ENCODE measurements at regions of chr14 and their contacts with region 1.

Region 1: GRCh38 chr14:23076785-23077408 is 18.0 kb downstream of the ACIN1 start:
- DNase-seq: no peak
- H3K4me3 ChIP-seq: no peak overlapping the region
- CTCF ChIP-seq: no peak

Region 2: DNA sequence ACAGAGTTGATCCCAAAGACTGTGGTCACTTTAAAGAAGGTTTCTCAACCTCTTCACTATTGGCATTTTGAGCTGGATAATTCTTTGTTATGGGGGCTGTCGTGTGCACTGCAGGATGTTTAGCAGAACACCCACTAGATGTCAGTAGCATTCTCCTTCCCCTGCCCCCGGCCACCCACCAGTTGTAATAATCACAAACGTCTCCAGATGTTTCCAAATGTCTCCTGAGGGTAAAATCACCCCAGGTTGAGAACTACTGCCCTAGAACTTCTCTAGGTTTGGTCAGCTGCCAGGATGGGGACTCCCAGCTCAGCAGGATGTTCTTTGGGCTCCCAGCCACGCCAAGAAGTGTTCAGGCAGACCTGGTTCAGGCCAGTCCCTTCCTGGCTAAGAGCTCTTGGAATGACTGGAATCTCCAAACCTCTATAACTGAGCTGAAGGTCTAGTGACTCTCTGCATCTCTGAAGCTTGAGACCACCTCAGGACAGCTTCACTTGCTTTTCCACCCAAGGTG is 82.1 kb before region 1 on chr14:
- CTCF ChIA-PET with region 1: interaction called, 70 read pairs
- POLR2A ChIA-PET with region 1: no interaction called
- DNase-seq: no peak
- H3K4me3 ChIP-seq: no peak overlapping the region
- CTCF ChIP-seq: peak; percentile 65

Region 3: DNA sequence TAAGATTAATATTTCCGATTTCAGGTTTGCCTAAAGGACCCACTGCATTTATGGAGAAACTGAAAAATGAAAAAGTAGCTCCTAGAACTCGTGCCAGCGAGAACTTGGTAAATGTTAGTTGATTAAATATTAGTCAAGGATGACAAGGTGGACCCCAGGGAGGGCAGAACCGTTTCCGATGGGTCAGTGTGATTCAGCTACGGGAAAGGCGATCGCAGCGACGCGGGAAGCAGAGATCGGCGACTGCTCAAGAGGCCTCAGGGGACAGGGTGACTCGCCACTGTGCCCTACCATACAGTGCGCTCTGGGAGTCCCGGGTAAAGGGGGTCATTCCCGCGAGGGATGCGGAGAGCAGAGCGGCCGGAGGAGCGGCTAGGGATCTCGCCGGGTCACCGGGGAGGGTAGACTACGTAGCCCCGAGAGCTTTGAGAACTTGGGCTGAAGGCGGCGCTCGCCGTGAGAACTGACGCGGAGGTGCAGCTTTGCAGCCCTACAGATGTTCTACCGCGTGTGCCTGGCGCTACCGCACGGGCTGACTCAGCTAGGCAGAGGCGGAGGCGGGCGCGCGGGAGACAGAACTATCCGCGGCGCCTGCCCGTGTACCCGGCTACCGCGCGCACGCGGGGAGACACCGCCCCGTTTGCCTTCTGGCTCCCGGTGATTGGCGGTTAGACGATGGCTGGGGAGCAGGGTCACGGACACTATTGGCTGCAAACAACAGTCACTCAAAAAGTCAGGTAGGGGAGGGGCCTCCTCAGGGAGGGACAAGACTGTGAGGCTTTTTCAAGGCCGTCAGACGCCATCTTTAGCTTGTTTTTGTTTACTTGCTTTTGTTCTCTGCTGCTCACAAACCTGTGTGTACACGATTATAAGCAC is 70.1 kb before region 1 on chr14:
- CTCF ChIA-PET with region 1: interaction called, 15 read pairs
- POLR2A ChIA-PET with region 1: no interaction called
- DNase-seq: peak; percentile 86
- H3K4me3 ChIP-seq: peak overlapping the region; percentile 70
- CTCF ChIP-seq: peak; percentile 54

Region 4: GRCh38 chr14:23095196-23096108 is 18.6 kb after region 1 on chr14 and contains the start of gene C14orf119:
- CTCF ChIA-PET with region 1: interaction called, 173 read pairs
- POLR2A ChIA-PET with region 1: interaction called, 29 read pairs
- DNase-seq: peak; percentile 95
- H3K4me3 ChIP-seq: peak within 1 kb of the TSS; percentile 100
- CTCF ChIP-seq: no peak

Region 5: GRCh38 chr14:23104591-23105347 is 27.9 kb after region 1 on chr14 and contains the start of gene CIROP:
- CTCF ChIA-PET with region 1: interaction called, 214 read pairs
- POLR2A ChIA-PET with region 1: no interaction called
- DNase-seq: no peak
- H3K4me3 ChIP-seq: no peak within 1 kb of the TSS
- CTCF ChIP-seq: no peak

Region 6: DNA sequence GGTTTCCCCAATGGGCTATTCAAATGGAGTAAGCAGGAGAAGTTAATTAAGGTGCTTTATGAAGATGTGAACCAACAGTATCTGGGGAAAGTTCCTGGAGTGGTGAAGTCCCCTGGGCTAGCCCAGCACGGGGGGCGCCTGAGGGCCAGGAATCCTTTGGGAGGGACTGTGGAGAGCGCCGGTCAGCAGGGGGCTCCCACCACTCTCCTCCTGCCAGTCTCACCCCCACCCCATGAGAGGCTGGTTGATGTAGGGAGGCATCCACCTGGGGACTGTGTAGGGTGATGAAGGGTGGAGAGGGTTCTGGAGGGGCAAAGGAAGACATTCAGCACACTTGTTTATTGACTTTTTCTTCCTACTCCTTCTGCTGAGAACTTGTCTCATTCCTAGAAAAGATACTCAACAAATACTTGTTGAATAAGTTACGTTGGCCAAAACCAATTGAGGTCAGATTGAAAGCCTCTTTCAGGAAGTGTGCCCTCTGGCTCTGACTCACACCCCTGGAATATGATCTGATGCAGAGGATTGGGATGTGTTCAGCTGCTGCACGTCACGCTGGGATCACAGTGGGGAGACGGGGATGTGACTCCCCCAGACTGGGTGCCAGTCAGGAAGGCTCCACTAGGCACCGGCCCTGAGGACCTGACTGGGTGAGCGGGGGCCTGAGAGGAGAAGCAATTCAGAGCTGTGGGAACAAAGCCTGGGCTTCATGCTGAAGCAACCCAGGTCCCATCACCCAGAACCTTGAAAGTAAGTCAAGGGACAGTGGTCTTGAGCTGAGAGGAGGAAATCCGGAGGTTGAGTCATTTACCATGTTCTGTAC is 38.0 kb after region 1 on chr14:
- CTCF ChIA-PET with region 1: interaction called, 214 read pairs
- POLR2A ChIA-PET with region 1: no interaction called
- DNase-seq: peak; percentile 97
- H3K4me3 ChIP-seq: 0 out of 2 replicates have a peak overlapping the region, but pooled peaks have one; percentile 20
- CTCF ChIP-seq: peak; percentile 7

Measured in AG04449 (cell line).